Dorsolateral prefrontal cortex (tissue), 120 donors: ENCODE measurements at regions of chr10 and their contacts with region 1.

Region 1: DNA sequence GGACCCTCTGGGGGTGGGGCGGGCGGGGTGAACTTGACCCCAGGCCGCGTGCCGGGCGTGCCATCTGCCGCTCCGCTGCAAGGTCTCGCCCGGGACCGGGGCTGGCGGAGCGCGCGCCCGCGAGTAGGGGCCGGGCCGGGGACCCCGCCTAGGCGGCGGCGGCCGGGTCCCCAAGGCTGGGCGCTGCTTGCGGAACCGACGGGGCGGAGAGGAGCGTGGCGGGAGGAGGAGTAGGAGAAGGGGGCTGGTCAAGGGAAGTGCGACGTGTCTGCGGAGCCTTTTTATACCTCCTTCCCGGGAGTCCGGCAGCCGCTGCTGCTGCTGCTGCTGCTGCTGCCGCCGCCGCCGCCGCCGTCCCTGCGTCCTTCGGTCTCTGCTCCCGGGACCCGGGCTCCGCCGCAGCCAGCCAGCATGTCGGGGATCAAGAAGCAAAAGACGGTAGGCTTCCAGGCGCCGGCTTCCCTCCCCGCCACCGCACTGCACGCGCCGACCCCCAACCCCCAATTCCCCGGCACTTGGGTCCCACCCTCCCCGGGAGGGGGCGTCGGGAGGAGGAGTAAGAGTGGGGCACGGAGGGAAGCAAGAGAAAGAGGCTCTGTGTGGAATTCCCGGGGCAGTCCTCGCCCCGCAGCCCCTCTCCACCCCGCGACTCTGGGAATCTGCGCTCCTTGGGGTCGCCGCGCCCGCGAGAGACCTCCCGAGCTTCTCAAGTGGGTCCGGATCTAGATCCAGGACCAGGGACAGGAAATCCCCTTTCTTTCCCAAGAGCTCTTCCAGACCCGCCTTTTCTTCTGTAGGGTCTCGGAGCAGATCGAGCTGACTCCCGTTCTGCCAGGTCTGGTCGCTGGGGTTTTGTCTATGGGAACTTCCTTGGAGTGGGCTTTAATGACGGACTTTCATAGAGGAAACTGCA is at the start of gene PAPSS2:
- DNase-seq: peak in 5 of 10 donors; percentile 11 to 52 (median 37)
- H3K4me3 ChIP-seq: peak within 1 kb of the TSS; percentile 37 to 87 (median 69)
- H3K27ac ChIP-seq: peak within 1 kb of the TSS in 46 of 59 donors; percentile 3 to 86 (median 56)
- H3K27me3 ChIP-seq: peaks cover 0 to 22% (median 0%) of the 10 kb centered on the region in 45 donors
- CTCF ChIP-seq: peak in 3 of 56 donors; percentile 9 to 25 (median 18)
- total RNA-seq, gene PAPSS2: 3.3 to 29.8 (median 13.6) TPM

Region 2: DNA sequence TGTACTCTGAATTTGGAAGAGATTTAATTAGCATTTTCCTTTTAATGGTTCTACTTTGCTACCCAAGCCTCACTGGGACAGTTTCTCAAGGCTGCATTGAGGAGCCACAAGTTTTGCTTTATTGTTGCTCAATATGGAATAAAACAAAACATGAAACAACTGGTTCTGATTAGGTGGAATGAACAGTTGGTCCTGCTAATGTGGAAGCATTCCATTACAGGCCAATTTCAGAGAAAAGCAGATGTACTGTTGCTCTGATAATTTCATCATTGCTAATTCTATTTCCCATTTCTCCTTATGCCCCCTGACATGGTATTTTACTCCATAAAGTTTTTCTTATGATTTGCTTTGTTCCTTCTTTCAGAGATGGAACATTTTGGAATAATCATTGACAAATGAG is 66.1 kb before region 1 on chr10:
- intact Hi-C with region 1: no loop called
- DNase-seq: no peak
- H3K4me3 ChIP-seq: no peak overlapping the region
- H3K27ac ChIP-seq: no peak overlapping the region
- H3K27me3 ChIP-seq: no peaks in the 10 kb centered on the region
- CTCF ChIP-seq: no peak

Region 3: DNA sequence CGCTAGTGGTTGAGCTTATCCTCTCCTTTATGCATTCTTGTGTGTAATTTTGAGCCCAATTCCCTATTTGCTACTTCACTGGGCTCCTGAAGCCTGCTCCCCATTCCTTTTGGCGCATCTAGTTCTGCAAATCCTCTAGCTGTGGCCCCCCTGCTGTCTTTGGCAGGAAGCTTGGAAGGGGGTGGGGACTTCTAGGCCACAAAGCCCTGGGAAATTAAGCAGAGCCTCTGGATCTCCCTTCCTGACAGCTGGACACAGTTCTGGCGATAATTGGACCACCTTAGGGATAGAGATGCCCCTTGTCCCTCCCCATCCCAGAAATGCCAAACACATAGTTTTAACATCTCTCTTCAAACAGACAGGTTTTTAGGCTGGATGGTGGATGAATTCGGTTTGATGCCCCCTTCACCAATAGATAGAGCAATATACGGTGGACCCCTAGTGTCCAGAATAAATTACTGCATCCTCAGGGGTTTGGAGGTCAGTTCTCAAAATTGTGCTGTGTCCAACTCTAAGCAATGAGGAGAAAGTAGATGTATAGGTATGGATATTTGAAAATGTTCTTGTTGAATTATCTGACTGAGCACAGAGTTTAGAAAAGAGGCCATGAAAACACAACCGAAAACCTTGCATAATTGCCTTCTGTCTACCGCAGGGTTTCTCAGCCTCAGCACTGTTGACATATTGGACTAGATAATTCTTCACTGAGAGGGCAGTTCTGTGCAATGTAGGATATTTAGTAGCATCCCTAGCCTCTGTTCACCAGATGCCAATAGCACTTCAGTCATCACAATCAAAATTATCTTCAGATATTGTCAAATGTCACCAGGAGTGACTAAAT is 75.4 kb after region 1 on chr10:
- intact Hi-C with region 1: loop called (anchors 5 to 10 kb)
- DNase-seq: no peak
- H3K4me3 ChIP-seq: peak overlapping the region in 9 of 59 donors; percentile 8 to 44 (median 19)
- H3K27ac ChIP-seq: peak overlapping the region in 4 of 59 donors; percentile 23 to 51 (median 38)
- H3K27me3 ChIP-seq: peaks cover 0 to under 1% (median 0%) of the 10 kb centered on the region in 45 donors
- CTCF ChIP-seq: peak; percentile 63 to 85 (median 76)

Region 4: DNA sequence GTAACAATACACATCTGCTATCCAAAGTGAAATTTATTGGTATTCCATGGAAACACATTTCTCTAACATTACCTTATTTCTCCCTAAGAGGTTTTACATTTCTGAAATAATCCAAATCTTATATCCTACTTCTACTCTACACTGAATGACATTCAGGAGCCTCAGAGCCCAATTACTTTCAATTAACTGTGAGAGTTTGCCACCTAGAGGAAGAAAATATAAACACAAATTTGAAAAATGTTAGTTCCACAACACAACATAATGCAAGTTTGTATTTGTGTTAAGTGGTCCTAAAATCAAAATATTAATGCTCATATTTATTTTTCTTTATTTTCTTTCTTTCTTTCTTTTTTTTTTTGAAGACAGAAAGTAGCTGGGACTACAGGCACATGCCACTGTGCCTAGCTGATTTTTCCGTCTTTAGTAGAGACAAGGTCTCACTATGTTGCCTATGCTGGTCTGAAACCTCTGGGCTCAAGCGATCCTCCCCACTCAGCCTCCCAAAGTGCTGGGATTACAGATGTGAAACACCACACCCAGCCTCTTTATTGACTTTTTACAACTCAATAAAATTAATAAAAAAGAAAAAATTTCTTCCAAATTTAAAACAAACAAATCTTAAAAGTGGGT is 112.2 kb after region 1 on chr10:
- intact Hi-C with region 1: loop called in 1 of 2 experiments (anchors 5 kb)
- DNase-seq: no peak
- H3K4me3 ChIP-seq: no peak overlapping the region
- H3K27ac ChIP-seq: no peak overlapping the region
- H3K27me3 ChIP-seq: no peaks in the 10 kb centered on the region
- CTCF ChIP-seq: peak; percentile 35 to 83 (median 66)